ENCODE measurements at regions of chr3 and their contacts with region 1.

Region 1: DNA sequence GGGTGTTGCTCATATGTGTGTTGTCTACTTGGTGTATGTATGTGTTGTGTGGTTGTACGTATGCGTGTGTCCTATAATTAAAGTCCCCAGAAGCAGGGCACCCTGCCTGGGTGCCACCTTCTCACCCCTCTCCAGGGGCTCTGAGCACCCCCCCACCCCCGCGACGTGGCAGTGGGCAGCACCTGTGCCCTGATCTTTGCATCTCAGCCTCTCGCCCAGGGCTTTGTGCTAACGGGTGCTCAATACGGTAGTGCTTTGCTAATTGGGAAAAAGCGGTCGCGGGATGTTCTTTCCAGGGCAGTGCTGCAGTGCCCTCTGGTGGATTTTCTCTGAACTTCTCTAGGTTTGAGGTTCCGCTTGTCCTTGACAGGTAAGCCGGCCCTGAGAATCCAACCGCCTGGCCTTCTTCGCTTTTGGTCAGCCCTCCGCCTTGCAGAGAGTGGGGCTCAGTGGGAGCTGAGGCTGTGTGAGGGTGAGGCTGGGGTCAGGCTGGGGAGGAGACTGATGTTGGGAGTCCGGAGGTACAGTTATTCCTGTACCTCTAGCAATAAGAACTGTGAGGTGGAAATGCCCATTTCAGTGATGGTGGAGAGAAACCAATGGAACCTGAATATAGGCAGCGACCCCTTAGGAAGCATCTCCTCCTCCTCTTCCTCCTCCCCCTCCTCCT is 17.6 kb upstream of the EPHB3 start:
- DNase-seq: peak; percentile 75 to 81 (median 78)
- H3K4me3 ChIP-seq: no peak overlapping the region
- H3K4me3 Mint-ChIP-seq: peak overlapping the region in 6 of 8 donors; percentile 40 to 64 (median 56)
- H3K27ac ChIP-seq: no peak overlapping the region
- H3K27ac Mint-ChIP-seq: peak overlapping the region in 1 of 7 donors; percentile 65
- H3K4me1 ChIP-seq: peaks cover 12% of the 10 kb centered on the region
- H3K4me1 Mint-ChIP-seq: peaks cover 9 to 13% (median 12%) of the 10 kb centered on the region in 4 donors
- H3K27me3 ChIP-seq: peaks cover 5% of the 10 kb centered on the region
- H3K27me3 Mint-ChIP-seq: peaks cover 11 to 23% of the 10 kb centered on the region in 2 donors

Region 2: GRCh38 chr3:184135149-184135910 is 408.6 kb before region 1 on chr3 and contains the start of gene EIF2B5:
- CTCF ChIA-PET with region 1: no interaction called
- POLR2A ChIA-PET with region 1: no interaction called
- intact Hi-C with region 1: loop called (anchors 10 kb)
- DNase-seq: peak; percentile 85 to 90 (median 86)
- H3K4me3 ChIP-seq: peak within 1 kb of the TSS; percentile 95 to 96
- H3K4me3 Mint-ChIP-seq: peak within 1 kb of the TSS; percentile 95 to 99 (median 98)
- H3K27ac ChIP-seq: peak within 1 kb of the TSS; percentile 78
- H3K27ac Mint-ChIP-seq: peak within 1 kb of the TSS; percentile 90 to 98 (median 97)
- H3K4me1 ChIP-seq: peaks cover 28% of the 10 kb centered on the region
- H3K4me1 Mint-ChIP-seq: peaks cover 23 to 49% (median 33%) of the 10 kb centered on the region in 4 donors
- H3K27me3 ChIP-seq: no peaks in the 10 kb centered on the region
- H3K27me3 Mint-ChIP-seq: no peaks in the 10 kb centered on the region
- total RNA-seq, gene EIF2B5: 82.3 to 87.6 TPM

Region 3: DNA sequence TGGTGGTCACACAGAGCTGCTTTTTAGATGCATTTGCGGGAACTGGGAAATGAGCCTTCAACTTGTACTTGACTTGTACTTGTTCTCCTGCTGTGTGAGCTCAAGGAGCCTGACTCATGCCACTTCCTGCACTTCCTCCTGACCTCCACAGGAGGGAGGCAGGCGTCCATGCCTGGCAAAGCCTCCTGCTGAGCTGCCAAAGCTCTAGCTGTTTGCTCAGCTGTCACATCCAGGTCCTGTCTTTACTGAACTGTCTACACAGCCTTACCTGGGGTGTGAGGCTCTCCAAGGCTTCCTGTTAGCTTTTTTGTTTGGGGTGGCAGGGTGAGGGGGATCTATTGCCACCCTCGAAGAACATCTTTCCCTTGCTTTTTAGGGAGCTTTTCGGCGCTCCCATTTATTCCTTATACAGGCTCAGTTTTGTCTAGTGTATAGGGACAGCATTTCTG is 172.4 kb before region 1 on chr3:
- CTCF ChIA-PET with region 1: interaction called, 42 read pairs
- POLR2A ChIA-PET with region 1: no interaction called
- intact Hi-C with region 1: loop called (anchors 1 kb)
- DNase-seq: peak; percentile 47 to 62 (median 58)
- H3K4me3 ChIP-seq: no peak overlapping the region
- H3K4me3 Mint-ChIP-seq: no peak overlapping the region
- H3K27ac ChIP-seq: no peak overlapping the region
- H3K27ac Mint-ChIP-seq: no peak overlapping the region
- H3K4me1 ChIP-seq: no peaks in the 10 kb centered on the region
- H3K4me1 Mint-ChIP-seq: peaks cover 6 to 18% (median 10%) of the 10 kb centered on the region in 4 donors
- H3K27me3 ChIP-seq: no peaks in the 10 kb centered on the region
- H3K27me3 Mint-ChIP-seq: peaks cover 9 to 11% of the 10 kb centered on the region in 2 donors

Region 4: DNA sequence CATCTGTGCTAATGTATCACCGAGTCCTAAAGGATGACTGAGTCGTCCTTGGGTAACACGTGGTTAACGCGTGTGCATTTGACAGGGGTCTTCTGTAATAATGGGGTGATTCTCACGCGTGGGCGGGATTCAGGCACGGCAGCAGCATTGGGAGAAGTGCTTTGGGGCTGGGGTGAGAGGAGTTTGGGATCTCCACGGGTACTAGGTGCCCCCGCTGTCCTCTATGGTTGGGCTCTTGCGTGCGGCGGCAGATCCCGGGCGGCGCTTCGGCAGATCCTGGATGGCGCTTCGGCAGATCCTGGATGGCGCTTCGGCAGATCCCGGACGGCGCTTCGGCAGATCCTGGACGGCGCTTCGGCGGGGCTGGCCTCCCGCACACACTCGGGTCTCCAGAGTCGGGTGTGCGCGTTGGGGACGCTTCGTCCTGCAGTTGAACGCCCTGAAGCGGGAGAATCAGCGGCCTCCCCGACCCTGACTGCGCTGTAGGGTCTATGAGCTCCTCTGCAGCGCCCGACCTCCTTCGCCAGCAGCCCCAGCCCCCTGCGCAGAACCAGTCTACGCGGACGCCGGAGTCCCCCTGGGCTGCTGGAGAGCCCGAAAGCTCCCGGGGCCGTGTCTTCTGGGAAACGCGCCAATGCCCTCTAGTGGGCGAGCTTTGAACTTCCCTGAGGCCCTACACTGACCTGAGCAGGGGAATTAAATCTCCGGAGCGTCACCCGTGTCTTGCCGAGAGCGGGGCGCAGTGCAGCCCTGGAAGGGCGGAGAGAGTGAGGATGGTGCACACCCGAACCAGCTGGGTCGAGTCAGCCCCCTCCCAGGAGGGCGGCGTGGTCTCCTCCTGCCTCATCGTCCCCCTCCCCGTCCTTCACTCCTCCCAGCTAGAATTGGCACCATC is 30.5 kb before region 1 on chr3:
- CTCF ChIA-PET with region 1: interaction called, 68 read pairs
- POLR2A ChIA-PET with region 1: no interaction called
- intact Hi-C with region 1: no loop called
- DNase-seq: peak; percentile 72 to 78 (median 74)
- H3K4me3 ChIP-seq: peak overlapping the region in 1 of 2 donors; percentile 51
- H3K4me3 Mint-ChIP-seq: peak overlapping the region; percentile 41 to 77 (median 68)
- H3K27ac ChIP-seq: no peak overlapping the region
- H3K27ac Mint-ChIP-seq: no peak overlapping the region
- H3K4me1 ChIP-seq: peaks cover 11% of the 10 kb centered on the region
- H3K4me1 Mint-ChIP-seq: peaks cover 4 to 16% (median 8%) of the 10 kb centered on the region in 4 donors
- H3K27me3 ChIP-seq: peaks cover 26% of the 10 kb centered on the region
- H3K27me3 Mint-ChIP-seq: peaks cover 39 to 51% of the 10 kb centered on the region in 2 donors

Region 5: DNA sequence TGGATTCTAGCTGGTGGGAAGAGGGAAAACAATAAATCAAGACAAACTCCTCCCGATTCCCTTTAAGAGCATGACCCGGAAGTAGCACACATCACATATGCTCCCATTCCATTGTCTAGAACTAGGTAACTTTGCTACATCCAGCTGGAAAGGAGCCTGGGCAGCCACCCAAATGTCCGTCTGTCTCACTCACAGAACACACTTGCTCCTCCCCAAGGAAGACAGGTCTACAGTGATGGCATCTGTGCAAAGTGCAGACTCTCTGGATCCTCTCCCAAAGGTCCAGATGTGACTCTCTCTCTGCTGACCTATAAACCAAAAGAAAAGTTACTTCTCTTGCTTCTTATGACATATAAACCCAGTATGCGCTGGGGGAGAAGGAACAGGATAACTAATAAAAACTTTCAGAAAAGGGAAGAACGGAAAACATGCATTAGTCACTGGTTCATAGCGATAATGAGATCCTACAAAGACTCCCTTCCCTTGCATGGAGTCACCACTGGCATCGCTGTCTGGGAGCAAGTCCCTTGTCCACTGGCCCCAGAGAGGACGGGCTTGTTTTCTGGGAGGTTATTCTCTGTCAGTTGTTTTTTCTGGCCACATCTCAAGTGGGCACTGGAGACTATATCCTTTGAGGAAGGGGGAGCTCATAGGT is 12.2 kb before region 1 on chr3:
- CTCF ChIA-PET with region 1: interaction called, 31 read pairs
- POLR2A ChIA-PET with region 1: no interaction called
- intact Hi-C with region 1: no loop called
- DNase-seq: no peak
- H3K4me3 ChIP-seq: no peak overlapping the region
- H3K4me3 Mint-ChIP-seq: no peak overlapping the region
- H3K27ac ChIP-seq: no peak overlapping the region
- H3K27ac Mint-ChIP-seq: no peak overlapping the region
- H3K4me1 ChIP-seq: no peaks in the 10 kb centered on the region
- H3K4me1 Mint-ChIP-seq: no peaks in the 10 kb centered on the region
- H3K27me3 ChIP-seq: no peaks in the 10 kb centered on the region
- H3K27me3 Mint-ChIP-seq: peaks cover 14 to 20% of the 10 kb centered on the region in 2 donors

Region 6: GRCh38 chr3:184636741-184637316 is 92.9 kb after region 1 on chr3:
- CTCF ChIA-PET with region 1: no interaction called
- POLR2A ChIA-PET with region 1: no interaction called
- intact Hi-C with region 1: no loop called
- DNase-seq: peak in 1 of 5 donors; percentile 9
- H3K4me3 ChIP-seq: no peak overlapping the region
- H3K4me3 Mint-ChIP-seq: peak overlapping the region in 4 of 8 donors; percentile 14 to 56 (median 47)
- H3K27ac ChIP-seq: no peak overlapping the region
- H3K27ac Mint-ChIP-seq: peak overlapping the region in 2 of 7 donors; percentile 58 to 80
- H3K4me1 ChIP-seq: peaks cover 15% of the 10 kb centered on the region
- H3K4me1 Mint-ChIP-seq: peaks cover 5 to 11% (median 5%) of the 10 kb centered on the region in 4 donors
- H3K27me3 ChIP-seq: no peaks in the 10 kb centered on the region
- H3K27me3 Mint-ChIP-seq: peaks cover 0 to 3% of the 10 kb centered on the region in 2 donors

Region 7: DNA sequence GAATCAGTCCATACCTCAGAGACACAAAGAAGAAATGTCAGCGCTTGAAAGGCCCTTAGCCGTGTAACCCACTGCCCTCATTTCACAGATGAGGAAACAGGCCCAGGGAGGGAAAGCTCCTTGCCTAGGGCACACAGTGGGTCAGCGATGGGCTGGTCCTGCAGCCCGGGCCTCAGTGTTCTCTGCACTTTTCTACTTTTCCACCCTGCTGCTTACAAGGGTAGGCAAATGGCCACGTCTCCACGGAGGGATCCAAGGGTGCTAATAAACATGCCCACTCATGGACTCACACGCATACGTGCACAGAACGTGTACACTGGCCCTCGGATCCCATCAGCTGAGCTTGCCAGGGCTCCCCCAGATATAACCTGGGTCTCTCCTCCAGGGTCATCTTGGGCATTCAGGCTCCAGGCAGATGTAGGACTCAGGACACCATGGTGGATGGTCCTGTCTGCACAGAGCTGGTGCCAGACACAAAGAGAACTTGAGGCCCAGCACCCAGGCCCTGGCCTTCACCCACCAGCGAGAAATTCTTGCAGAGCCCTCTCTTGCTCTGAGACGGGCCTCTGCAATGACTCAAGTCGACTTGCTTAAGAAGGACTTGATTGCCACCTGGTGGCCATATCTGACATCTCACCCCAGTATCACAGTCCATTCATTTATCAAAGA is 233.5 kb after region 1 on chr3:
- CTCF ChIA-PET with region 1: interaction called, 25 read pairs
- POLR2A ChIA-PET with region 1: no interaction called
- intact Hi-C with region 1: loop called (anchors 1 kb)
- DNase-seq: peak; percentile 75 to 86 (median 76)
- H3K4me3 ChIP-seq: no peak overlapping the region
- H3K4me3 Mint-ChIP-seq: no peak overlapping the region
- H3K27ac ChIP-seq: no peak overlapping the region
- H3K27ac Mint-ChIP-seq: no peak overlapping the region
- H3K4me1 ChIP-seq: no peaks in the 10 kb centered on the region
- H3K4me1 Mint-ChIP-seq: peaks cover 0 to 4% (median under 1%) of the 10 kb centered on the region in 4 donors
- H3K27me3 ChIP-seq: no peaks in the 10 kb centered on the region
- H3K27me3 Mint-ChIP-seq: peaks cover 14 to 30% of the 10 kb centered on the region in 2 donors